Activated CD4-positive, alpha-beta memory T cell treated with anti-CD3 and anti-CD28 coated beads, Interleukin-2, amount 10 ng/mL, durations not matched to agents 7 days and 5 days (primary cell): ENCODE measurements at regions of chr4 and their contacts with region 1.

Region 1: DNA sequence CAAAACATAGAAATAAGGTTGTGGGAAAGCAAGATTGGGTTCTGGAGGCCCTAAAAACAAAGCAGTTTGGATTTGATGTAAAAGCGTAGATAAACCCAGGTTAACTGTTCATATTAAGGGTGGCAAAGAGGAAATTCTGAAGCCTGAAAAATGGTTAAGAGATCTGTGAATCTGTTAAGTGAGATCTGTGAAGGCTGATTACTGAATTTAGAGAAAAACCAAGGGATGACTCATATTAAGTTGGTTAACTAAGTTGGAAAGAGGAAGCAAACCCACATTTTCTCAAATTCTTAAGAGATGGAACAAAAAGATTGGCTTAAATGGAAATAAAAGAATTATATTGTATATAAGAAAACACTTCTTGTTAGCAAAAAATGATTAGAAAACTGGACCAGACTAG is 22.8 kb downstream of the GPAT3 start:
- DNase-seq: no peak
- H3K4me3 Mint-ChIP-seq: peak overlapping the region; percentile 12
- H3K27ac Mint-ChIP-seq: peak overlapping the region; percentile 88
- H3K4me1 Mint-ChIP-seq: peaks cover 71% of the 10 kb centered on the region
- H3K27me3 Mint-ChIP-seq: peaks cover 2% of the 10 kb centered on the region

Region 2: DNA sequence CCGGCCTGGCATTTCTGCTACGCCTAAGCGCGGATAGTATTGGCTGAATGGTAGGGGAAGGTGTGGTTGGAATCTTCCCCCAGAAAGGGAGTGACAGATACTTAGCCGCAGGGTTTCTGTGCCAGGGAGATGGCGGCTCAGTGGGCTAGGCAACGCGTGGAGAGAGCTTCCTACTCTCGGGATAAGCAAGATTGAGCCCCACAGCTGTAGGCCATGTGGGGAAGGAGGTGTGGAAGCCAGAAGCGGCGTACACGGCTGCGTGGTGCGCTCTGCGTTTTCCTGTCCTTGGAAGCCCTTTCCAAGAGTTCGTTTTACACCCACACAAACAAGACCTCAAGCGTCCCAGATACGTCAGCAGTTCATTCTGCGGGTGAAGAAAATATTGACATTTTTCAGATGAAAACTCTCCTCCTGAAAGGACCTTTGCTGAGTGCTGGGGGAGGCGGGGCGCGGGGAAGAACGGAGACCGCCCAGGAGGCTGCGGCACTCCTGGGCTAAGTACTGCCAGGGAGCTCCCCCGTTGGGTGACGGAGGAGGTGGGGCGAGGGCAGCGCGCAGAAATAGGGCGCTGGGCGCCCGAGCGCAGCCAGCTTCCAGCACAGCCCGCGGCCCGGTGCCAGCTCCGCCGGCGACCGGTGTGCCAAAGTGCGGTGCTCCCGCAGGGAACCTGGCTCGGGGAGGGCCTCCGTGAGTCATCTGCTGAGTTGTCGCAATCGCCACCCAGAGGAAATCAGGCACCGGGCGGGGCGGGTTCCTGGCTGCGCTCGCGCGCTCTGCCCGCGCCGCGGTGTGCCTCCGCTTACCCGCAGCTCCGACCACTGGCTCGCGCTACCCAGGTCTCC is 22.9 kb before region 1 on chr4 and contains the start of gene GPAT3:
- CTCF ChIA-PET with region 1: interaction called, 3 read pairs
- POLR2A ChIA-PET with region 1: interaction called, 21 read pairs
- DNase-seq: peak; percentile 81
- H3K4me3 Mint-ChIP-seq: peak within 1 kb of the TSS; percentile 80
- H3K27ac Mint-ChIP-seq: peak within 1 kb of the TSS; percentile 32
- H3K4me1 Mint-ChIP-seq: peaks cover 35% of the 10 kb centered on the region
- H3K27me3 Mint-ChIP-seq: peaks cover 43% of the 10 kb centered on the region
- total RNA-seq, gene GPAT3: 27.2 to 27.7 TPM

Region 3: GRCh38 chr4:83548151-83548905 is 10.4 kb before region 1 on chr4:
- CTCF ChIA-PET with region 1: no interaction called
- POLR2A ChIA-PET with region 1: interaction called, 10 read pairs
- DNase-seq: peak; percentile 90
- H3K4me3 Mint-ChIP-seq: no peak overlapping the region
- H3K27ac Mint-ChIP-seq: peak overlapping the region; percentile 83
- H3K4me1 Mint-ChIP-seq: peaks cover 48% of the 10 kb centered on the region
- H3K27me3 Mint-ChIP-seq: no peaks in the 10 kb centered on the region